GM23248 (cell line): ENCODE measurements at regions of chr3 and their contacts with region 1.

Region 1: GRCh38 chr3:80688814-80689213 is 921.0 kb upstream of the ROBO1 start:
- DNase-seq: peak; percentile 44
- H3K4me3 ChIP-seq: no peak overlapping the region
- H3K27ac ChIP-seq: no peak overlapping the region
- H3K4me1 ChIP-seq: no peaks in the 10 kb centered on the region
- H3K27me3 ChIP-seq: no peaks in the 10 kb centered on the region

Region 2: GRCh38 chr3:79392479-79392878 is 1296.3 kb before region 1 on chr3:
- in situ Hi-C with region 1: no loop called
- DNase-seq: peak; percentile 13
- H3K4me3 ChIP-seq: no peak overlapping the region
- H3K27ac ChIP-seq: no peak overlapping the region
- H3K4me1 ChIP-seq: no peaks in the 10 kb centered on the region
- H3K27me3 ChIP-seq: no peaks in the 10 kb centered on the region

Region 3: GRCh38 chr3:79534727-79535126 is 1154.1 kb before region 1 on chr3:
- in situ Hi-C with region 1: loop called (anchors 25 kb)
- DNase-seq: peak; percentile 14
- H3K4me3 ChIP-seq: no peak overlapping the region
- H3K27ac ChIP-seq: no peak overlapping the region
- H3K4me1 ChIP-seq: no peaks in the 10 kb centered on the region
- H3K27me3 ChIP-seq: 0 out of 2 replicates have a peak, but pooled peaks cover 9% of the 10 kb centered on the region

Region 4: GRCh38 chr3:80472451-80472850 is 216.4 kb before region 1 on chr3:
- in situ Hi-C with region 1: no loop called
- DNase-seq: no peak
- H3K4me3 ChIP-seq: no peak overlapping the region
- H3K27ac ChIP-seq: no peak overlapping the region
- H3K4me1 ChIP-seq: no peaks in the 10 kb centered on the region
- H3K27me3 ChIP-seq: no peaks in the 10 kb centered on the region